Caco-2 (cell line): ENCODE measurements at regions of chr1 and their contacts with region 1.

Region 1: GRCh38 chr1:18480315-18481189 is at the start of gene KLHDC7A:
- DNase-seq: peak; percentile 88 to 92
- H3K4me3 ChIP-seq: peak within 1 kb of the TSS; percentile 24
- H3K4me3 Mint-ChIP-seq: peak within 1 kb of the TSS; percentile 65
- H3K27ac Mint-ChIP-seq: peak within 1 kb of the TSS; percentile 70
- H3K4me1 ChIP-seq: peaks cover 21% of the 10 kb centered on the region
- H3K4me1 Mint-ChIP-seq: no peaks in the 10 kb centered on the region
- H3K27me3 ChIP-seq: no peaks in the 10 kb centered on the region
- H3K27me3 Mint-ChIP-seq: no peaks in the 10 kb centered on the region
- CTCF ChIP-seq: no peak
- total RNA-seq, gene KLHDC7A: 5.7 and 6.1 TPM in 2 replicates

Region 2: DNA sequence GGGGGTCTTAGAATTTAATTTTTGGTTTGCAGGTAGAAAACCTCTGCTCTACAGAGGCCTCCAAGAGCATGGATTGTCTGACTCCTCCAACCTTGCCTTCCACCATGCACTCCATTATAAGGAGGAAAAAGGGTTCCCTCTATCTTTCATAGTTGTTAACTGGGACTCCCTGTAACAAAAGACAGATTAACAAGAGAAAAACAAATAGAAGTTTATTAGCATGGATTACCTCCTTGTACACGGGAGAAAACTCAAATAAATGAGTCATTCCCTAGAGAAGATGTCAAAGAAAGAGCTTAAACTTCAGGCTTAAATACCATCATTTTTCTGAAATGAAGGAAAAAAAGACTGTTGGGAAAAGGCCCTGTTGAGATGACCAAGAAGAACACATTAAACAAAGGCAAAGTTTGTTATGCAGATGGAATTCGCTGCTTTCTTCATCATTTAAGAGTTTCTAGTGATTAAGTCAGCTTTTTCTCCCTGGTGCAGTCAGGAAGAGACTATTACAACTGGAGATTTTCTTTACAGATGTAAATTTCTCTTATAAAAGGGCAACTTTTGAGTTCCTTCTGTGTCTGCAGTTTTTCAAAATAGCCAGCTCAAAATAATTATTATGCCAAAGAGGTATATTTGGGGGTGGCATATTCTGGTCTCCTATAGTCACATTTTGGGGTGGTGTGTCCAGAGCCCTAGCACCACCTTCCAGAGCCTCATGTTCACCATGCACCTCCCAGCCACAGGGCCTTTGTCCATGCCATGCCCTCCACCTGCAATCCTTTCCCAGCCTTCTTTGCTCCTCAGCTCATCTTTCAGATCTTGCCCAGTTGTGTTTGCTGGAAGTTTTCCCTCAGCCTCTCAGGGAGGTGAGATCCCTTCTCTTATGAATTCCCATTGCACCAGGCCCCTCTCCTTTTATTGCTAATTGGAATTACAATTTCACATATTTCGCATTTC is 63.0 kb before region 1 on chr1:
- CTCF ChIA-PET with region 1: no interaction called
- POLR2A ChIA-PET with region 1: no interaction called
- intact Hi-C with region 1: loop called (anchors 5 kb)
- DNase-seq: peak in 1 of 2 experiments; percentile 12
- H3K4me3 ChIP-seq: no peak overlapping the region
- H3K4me3 Mint-ChIP-seq: no peak overlapping the region
- H3K27ac Mint-ChIP-seq: peak overlapping the region; percentile 24
- H3K4me1 ChIP-seq: peaks cover 34% of the 10 kb centered on the region
- H3K4me1 Mint-ChIP-seq: peaks cover 32% of the 10 kb centered on the region
- H3K27me3 ChIP-seq: no peaks in the 10 kb centered on the region
- H3K27me3 Mint-ChIP-seq: no peaks in the 10 kb centered on the region
- CTCF ChIP-seq: no peak

Region 3: DNA sequence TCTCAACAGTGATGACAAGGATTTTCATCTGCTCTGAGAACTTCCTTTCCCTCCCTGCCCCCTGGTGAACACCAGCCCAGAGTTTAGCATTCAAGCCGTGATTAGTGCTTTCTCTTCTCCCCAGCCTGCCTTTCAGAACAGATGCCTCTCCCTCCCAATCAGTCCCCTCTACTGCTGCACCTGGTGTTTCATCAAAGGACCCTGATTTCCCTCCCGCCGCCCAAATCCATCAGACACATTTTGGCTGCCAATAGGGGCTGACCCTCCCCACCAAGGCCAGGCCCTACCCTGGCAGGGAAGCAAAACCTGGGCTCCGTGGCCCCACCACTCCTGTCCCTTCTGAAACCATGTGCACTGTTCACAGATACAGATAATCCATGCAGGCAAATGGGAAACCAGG is 33.8 kb before region 1 on chr1:
- CTCF ChIA-PET with region 1: no interaction called
- POLR2A ChIA-PET with region 1: no interaction called
- intact Hi-C with region 1: no loop called
- DNase-seq: no peak
- H3K4me3 ChIP-seq: no peak overlapping the region
- H3K4me3 Mint-ChIP-seq: no peak overlapping the region
- H3K27ac Mint-ChIP-seq: no peak overlapping the region
- H3K4me1 ChIP-seq: 0 out of 2 replicates have a peak, but pooled peaks cover 7% of the 10 kb centered on the region
- H3K4me1 Mint-ChIP-seq: peaks cover 7% of the 10 kb centered on the region
- H3K27me3 ChIP-seq: no peaks in the 10 kb centered on the region
- H3K27me3 Mint-ChIP-seq: peaks cover 4% of the 10 kb centered on the region
- CTCF ChIP-seq: no peak